ENCODE measurements at regions of chr14 and their contacts with region 1.

Region 1: GRCh38 chr14:22483863-22484593 is 105.0 kb downstream of the DAD1 start:
- DNase-seq: no peak
- ATAC-seq: peak in 4 of 8 donors; percentile 8 to 30 (median 18)
- H3K4me3 ChIP-seq: no peak overlapping the region
- H3K27ac ChIP-seq: peak overlapping the region in 8 of 10 donors; percentile 10 to 78 (median 53)
- H3K4me1 ChIP-seq: peaks cover 0 to 97% (median 64%) of the 10 kb centered on the region in 9 donors
- H3K27me3 ChIP-seq: no peaks in the 10 kb centered on the region
- CTCF ChIP-seq: no peak

Region 2: DNA sequence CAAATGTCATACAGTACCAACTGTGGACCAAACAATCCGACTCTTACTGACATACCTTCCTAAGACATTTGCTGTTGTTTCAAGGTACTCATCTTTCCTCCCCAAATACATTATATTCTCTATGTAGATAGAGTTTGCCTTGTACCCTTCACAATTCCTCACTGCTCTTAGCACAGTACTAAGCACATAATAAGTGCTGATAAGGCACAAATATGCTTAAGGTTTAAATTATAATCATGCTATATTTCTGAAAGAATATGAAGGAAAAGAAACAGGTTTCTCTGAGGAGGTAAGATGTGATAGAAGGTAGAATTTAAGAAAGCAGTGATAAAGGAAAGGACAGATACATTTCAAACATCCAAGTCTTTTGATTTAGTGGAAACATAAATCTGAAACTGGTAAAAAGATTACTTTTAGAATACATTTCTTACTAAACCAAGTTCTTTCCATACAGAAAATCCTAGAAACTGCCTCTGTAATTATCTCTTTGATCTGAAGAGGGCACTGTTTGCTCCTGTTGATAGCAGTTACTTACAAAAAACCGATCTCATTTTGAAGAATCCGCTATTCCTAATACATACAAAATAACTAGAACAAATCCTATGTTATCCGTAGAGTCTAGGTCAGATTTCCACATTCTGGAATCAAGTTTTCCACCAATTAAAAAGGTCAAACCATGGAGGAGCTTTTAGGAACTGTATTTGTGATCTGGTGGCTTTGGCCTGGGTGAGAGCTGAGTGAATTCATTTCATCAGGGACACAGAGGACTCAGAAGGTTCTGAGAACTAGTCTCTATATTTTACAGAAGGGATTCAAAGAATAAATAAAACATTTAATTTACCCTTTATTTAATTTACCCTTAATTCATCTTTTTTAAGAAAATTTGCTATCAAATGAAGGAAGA is 206.9 kb before region 1 on chr14:
- intact Hi-C with region 1: no loop called
- DNase-seq: no peak
- ATAC-seq: no peak
- H3K4me3 ChIP-seq: no peak overlapping the region
- H3K27ac ChIP-seq: no peak overlapping the region
- H3K4me1 ChIP-seq: peaks cover 0 to 10% (median 0%) of the 10 kb centered on the region in 9 donors
- H3K27me3 ChIP-seq: peaks cover 0 to 28% (median 12%) of the 10 kb centered on the region in 7 donors
- CTCF ChIP-seq: peak in 7 of 9 donors; percentile 39 to 64 (median 46)

Region 3: GRCh38 chr14:22549981-22550673 is 66.1 kb after region 1 on chr14:
- intact Hi-C with region 1: loop called in 4 of 10 experiments (anchors 5 kb)
- DNase-seq: no peak
- ATAC-seq: peak in 1 of 8 donors; percentile 24
- H3K4me3 ChIP-seq: peak overlapping the region in 1 of 10 donors; percentile 15
- H3K27ac ChIP-seq: peak overlapping the region in 6 of 10 donors; percentile 20 to 82 (median 38)
- H3K4me1 ChIP-seq: peaks cover 0 to 72% (median 30%) of the 10 kb centered on the region in 9 donors
- H3K27me3 ChIP-seq: no peaks in the 10 kb centered on the region
- CTCF ChIP-seq: no peak

Region 4: DNA sequence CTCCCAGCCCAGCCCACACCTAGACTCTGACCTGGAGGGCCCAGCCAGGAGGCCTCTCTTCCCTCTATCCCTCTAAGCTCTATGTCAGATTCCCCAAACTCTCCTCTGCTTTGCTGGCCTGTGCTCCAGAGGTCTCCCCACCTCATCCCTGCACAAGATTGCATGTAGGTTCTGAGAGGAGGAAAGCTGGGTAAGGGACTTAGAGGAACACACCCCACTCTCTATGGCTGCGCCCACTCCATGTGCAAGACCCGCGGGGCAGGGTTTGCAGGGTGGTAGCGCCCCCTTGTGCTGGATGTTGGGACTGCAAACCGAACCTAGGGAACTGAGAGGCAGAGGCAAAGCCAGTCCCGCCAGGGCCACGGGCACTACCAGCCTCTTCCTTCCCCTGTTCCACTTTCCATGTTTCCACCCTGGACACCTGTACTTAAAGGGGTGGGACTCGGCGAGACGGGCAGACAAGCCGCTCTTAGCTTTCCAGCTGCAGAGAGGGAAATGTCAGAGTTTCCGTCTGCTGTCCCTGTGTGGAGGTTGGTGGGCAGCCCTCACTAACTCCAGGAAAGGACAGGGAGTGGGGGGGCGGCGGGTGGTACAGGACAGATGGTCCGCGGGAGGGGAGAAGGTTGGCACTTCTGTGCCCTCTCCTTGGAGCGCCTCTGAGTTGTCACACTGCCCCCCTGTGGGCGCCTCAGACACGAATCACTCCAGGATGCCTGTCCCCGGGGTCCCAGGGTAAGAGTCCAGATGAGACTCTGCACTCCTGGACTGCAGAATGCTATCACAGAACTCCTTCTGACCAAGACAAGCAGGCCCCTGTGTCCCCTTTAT is 369.1 kb after region 1 on chr14:
- intact Hi-C with region 1: no loop called
- DNase-seq: peak; percentile 90 to 92
- ATAC-seq: peak; percentile 48 to 80 (median 64)
- H3K4me3 ChIP-seq: peak overlapping the region; percentile 24 to 61 (median 53)
- H3K27ac ChIP-seq: peak overlapping the region in 7 of 10 donors; percentile 5 to 79 (median 56)
- H3K4me1 ChIP-seq: peaks cover 19 to 54% (median 47%) of the 10 kb centered on the region in 9 donors
- H3K27me3 ChIP-seq: no peaks in the 10 kb centered on the region
- CTCF ChIP-seq: peak; percentile 85 to 97 (median 90)